B cell (primary cell): ENCODE measurements at regions of chr7 and their contacts with region 1.

Region 1: GRCh38 chr7:23181684-23182553 is at the start of gene NUP42:
- DNase-seq: peak; percentile 98
- ATAC-seq: peak; percentile 89
- H3K4me3 ChIP-seq: peak within 1 kb of the TSS; percentile 77 to 99 (median 87)
- H3K4me3 Mint-ChIP-seq: peak within 1 kb of the TSS; percentile 96
- H3K27ac ChIP-seq: peak within 1 kb of the TSS; percentile 92 to 98
- H3K27ac Mint-ChIP-seq: peak within 1 kb of the TSS; percentile 98
- H3K4me1 ChIP-seq: peaks cover 17 to 20% of the 10 kb centered on the region in 2 donors
- H3K4me1 Mint-ChIP-seq: peaks cover 37% of the 10 kb centered on the region
- H3K27me3 ChIP-seq: no peaks in the 10 kb centered on the region
- H3K27me3 Mint-ChIP-seq: no peaks in the 10 kb centered on the region
- CTCF ChIP-seq: no peak
- total RNA-seq, gene NUP42: 49.2 and 58.8 TPM in 2 replicates

Region 2: DNA sequence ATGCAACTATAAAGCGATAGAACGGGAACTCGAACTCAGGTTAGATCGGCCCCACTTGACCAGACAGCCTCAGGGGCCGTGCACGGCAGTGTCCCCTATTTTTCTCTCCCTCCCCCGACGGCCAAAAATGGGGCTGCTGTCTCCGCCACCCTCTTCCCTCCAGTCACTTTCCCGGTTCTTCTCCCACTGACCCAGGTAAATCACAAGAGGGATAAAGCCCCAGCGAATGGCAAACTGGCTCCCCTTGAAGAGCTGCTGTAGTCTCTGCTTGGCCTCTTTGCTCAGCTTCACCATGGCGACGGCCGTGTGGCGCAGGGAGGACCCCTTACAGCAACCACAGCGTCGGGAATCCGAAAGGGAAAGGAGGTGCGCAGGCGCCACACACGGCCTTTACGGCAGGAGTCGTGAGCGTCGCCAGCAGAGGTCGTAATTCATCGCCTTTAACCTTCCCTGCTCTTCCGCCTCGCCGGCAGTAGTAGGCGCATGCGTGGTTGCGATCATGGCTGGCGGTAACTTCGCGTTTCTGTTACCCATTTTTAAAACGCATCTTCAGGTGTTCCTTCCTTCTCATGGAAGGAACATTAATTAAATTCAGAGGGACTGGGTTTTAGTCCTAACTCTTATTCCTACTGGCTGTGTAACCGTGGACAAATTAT is 359.3 kb before region 1 on chr7 and contains the start of gene TOMM7:
- CTCF ChIA-PET with region 1: no interaction called
- POLR2A ChIA-PET with region 1: no interaction called
- intact Hi-C with region 1: loop called (anchors 10 kb)
- DNase-seq: peak; percentile 97
- ATAC-seq: peak; percentile 98
- H3K4me3 ChIP-seq: peak within 1 kb of the TSS; percentile 82 to 97 (median 94)
- H3K4me3 Mint-ChIP-seq: peak within 1 kb of the TSS; percentile 98
- H3K27ac ChIP-seq: peak within 1 kb of the TSS; percentile 79 to 81
- H3K27ac Mint-ChIP-seq: peak within 1 kb of the TSS; percentile 97
- H3K4me1 ChIP-seq: peaks cover 12 to 21% of the 10 kb centered on the region in 2 donors
- H3K4me1 Mint-ChIP-seq: peaks cover 32% of the 10 kb centered on the region
- H3K27me3 ChIP-seq: no peaks in the 10 kb centered on the region
- H3K27me3 Mint-ChIP-seq: peaks cover 10% of the 10 kb centered on the region
- CTCF ChIP-seq: no peak
- total RNA-seq, gene TOMM7: 400 and 437 TPM in 2 replicates

Region 3: GRCh38 chr7:23013715-23014649 is 167.9 kb before region 1 on chr7 and contains the start of gene HYCC1:
- CTCF ChIA-PET with region 1: no interaction called
- POLR2A ChIA-PET with region 1: no interaction called
- intact Hi-C with region 1: loop called (anchors 1 kb)
- DNase-seq: peak; percentile 99
- ATAC-seq: peak; percentile 96
- H3K4me3 ChIP-seq: peak within 1 kb of the TSS; percentile 68 to 85 (median 80)
- H3K4me3 Mint-ChIP-seq: peak within 1 kb of the TSS; percentile 99
- H3K27ac ChIP-seq: peak within 1 kb of the TSS; percentile 63 to 70
- H3K27ac Mint-ChIP-seq: peak within 1 kb of the TSS; percentile 98
- H3K4me1 ChIP-seq: peaks cover 73 to 74% of the 10 kb centered on the region in 2 donors
- H3K4me1 Mint-ChIP-seq: peaks cover 42% of the 10 kb centered on the region
- H3K27me3 ChIP-seq: no peaks in the 10 kb centered on the region
- H3K27me3 Mint-ChIP-seq: no peaks in the 10 kb centered on the region
- CTCF ChIP-seq: peak; percentile 72
- total RNA-seq, gene HYCC1: 39.6 and 40.8 TPM in 2 replicates

Region 4: GRCh38 chr7:23298885-23299769 is 117.2 kb after region 1 on chr7 and contains the start of gene MALSU1:
- CTCF ChIA-PET with region 1: no interaction called
- POLR2A ChIA-PET with region 1: interaction called, 7 read pairs
- intact Hi-C with region 1: loop called (anchors 1 kb)
- DNase-seq: peak; percentile 98
- ATAC-seq: peak; percentile 100
- H3K4me3 ChIP-seq: peak within 1 kb of the TSS; percentile 70 to 95 (median 86)
- H3K4me3 Mint-ChIP-seq: peak within 1 kb of the TSS; percentile 87
- H3K27ac ChIP-seq: peak within 1 kb of the TSS; percentile 73 to 86
- H3K27ac Mint-ChIP-seq: peak within 1 kb of the TSS; percentile 94
- H3K4me1 ChIP-seq: peaks cover 16 to 23% of the 10 kb centered on the region in 2 donors
- H3K4me1 Mint-ChIP-seq: peaks cover 39% of the 10 kb centered on the region
- H3K27me3 ChIP-seq: peaks cover 0 to 6% (median 0%) of the 10 kb centered on the region in 4 experiments
- H3K27me3 Mint-ChIP-seq: no peaks in the 10 kb centered on the region
- CTCF ChIP-seq: no peak
- total RNA-seq, gene MALSU1: 38.0 and 40.8 TPM in 2 replicates

Region 5: GRCh38 chr7:24572997-24573625 is 1391.2 kb after region 1 on chr7 and contains the start of gene PALS2:
- CTCF ChIA-PET with region 1: no interaction called
- POLR2A ChIA-PET with region 1: no interaction called
- intact Hi-C with region 1: loop called (anchors 2 kb)
- DNase-seq: peak; percentile 90
- ATAC-seq: peak; percentile 79
- H3K4me3 ChIP-seq: peak within 1 kb of the TSS; percentile 63 to 88 (median 84)
- H3K4me3 Mint-ChIP-seq: peak within 1 kb of the TSS; percentile 91
- H3K27ac ChIP-seq: peak within 1 kb of the TSS; percentile 70 to 73
- H3K27ac Mint-ChIP-seq: peak within 1 kb of the TSS; percentile 89
- H3K4me1 ChIP-seq: peaks cover 24 to 29% of the 10 kb centered on the region in 2 donors
- H3K4me1 Mint-ChIP-seq: peaks cover 37% of the 10 kb centered on the region
- H3K27me3 ChIP-seq: peaks cover 0 to 3% (median 0%) of the 10 kb centered on the region in 4 experiments
- H3K27me3 Mint-ChIP-seq: peaks cover 5% of the 10 kb centered on the region
- CTCF ChIP-seq: no peak
- total RNA-seq, gene PALS2: 47.8 and 54.2 TPM in 2 replicates